Posterior cingulate gyrus (tissue), 11 donors: ENCODE measurements at regions of chr20 and their contacts with region 1.

Region 1: DNA sequence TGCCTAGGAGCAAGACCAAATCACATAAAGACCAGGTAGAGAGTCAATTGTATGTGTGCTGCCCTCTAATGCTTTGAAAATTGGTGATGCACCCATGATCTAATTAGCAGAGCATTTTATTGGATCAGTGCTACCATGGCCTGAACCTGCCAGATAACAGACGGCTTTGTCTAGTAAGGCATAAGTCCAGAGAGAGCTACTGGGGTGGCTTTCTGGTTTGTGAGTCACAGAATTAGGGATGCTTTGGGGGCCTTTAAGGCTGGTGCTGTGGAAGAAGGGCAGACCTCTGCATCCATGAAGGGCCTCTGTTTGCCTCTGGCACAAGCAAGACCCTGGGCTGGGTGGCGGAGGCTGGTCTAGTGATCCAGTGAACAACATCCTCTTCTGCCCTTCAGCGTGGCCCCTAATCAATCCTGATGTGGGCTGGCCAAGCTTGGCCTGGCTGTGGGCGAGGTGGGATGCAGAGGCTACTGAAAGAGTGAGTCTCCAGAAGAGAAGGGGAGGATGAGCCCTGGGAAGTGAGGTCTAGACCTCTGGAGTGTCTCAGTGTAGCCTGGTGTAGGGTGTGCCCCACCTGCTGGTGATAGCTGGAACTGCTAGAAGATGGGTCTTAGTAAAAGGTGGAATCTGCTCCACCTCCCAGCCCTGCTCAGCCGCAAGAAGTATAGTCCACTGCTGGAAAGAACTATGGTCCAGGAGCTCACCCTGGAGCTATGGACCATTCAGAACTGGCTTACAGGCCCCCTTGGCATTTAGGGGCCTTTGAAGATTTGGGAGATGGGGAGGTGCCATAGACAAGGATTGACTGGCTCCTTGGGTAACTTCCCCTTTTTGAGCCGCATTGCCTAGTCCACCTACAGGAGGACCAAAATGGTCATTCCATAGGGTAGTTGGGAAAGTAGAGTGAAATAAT is 36.7 kb upstream of the AAR2 start:
- DNase-seq: peak; percentile 59 to 96 (median 84)

Region 2: DNA sequence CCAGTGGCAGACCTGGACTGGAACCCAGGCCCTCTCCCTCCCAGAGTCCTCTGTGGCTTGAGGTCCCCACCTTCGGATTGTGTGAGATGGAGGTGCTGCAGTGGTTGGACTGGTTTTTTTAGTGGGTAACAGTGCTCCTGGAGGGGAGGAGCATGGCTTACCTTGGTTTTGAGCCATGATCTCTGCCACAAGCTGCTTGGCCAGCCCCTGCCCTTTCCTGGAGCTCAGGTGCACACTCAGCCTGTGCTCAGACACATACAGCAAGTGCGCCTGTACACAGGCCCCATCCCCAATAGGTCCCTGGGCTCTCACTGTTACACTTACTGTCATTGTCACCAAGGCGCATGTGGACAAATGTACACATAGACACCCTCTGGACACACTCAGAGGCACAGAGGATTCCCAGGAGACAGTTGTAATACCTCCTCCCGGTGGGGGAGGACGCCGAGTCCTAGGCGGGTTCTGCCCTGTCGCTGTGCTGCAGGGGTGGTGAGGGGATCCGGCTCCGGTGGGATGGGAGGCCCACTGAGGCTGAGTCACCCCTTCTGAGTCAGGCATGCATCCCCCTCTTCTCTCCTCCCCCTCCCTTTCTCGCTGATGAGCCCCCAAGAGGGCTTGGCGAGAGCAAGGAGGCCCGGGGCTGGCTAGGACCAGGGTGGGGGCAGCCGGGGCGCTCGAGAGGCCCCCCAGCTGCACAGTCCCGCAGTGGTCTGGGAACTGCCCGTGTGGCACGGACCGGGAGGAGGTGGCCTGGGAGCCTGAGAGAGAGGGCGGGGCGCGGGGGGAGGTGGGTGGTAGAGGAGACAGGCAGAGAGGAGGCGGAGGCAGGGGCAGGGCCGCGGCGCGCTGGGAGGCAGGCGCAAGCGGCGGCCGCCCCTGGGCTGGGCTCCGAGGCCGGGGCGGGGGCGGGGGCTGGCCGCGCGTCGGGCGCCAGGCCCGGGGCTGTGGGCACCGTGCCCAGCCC is 45.6 kb before region 1 on chr20:
- intact Hi-C with region 1: loop called (anchors 2 kb)
- DNase-seq: peak; percentile 75 to 97 (median 88)

Region 3: DNA sequence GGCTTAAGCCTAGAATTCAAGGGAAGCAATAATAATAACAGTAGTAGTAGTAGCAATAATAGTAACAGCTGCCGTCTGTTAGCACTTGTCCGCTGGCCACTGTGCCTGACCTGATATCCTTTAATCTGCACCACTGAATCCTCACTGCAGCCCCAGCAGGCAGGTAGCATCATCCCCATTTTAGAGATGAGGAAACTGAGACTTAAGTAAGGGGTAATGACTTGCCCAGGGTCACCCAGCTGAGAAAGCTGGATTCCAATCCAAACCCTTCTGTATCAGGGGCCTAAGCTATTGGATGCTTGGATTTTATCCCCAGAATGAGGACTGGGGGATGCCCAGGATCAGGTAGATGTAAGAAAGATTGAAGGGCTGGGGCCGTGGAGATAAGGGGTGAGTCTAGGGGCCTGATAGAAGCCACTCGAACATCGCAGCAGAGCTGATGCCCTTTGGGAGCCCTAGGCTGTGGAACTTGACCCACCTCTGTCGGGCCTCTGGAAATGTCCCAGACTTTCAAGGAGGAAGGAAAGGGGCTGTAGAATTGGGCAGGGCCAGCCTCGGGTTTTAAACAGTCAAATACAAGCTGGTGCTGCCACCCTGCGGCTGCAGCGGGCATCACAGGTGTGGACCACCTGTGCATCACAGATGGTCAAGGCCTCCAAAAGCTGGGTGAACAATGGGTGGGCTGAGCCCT is 239.6 kb after region 1 on chr20:
- intact Hi-C with region 1: loop called (anchors 1 kb)
- DNase-seq: peak; percentile 53 to 95 (median 79)